ENCODE measurements at regions of chr12 and their contacts with region 1.

Region 1: DNA sequence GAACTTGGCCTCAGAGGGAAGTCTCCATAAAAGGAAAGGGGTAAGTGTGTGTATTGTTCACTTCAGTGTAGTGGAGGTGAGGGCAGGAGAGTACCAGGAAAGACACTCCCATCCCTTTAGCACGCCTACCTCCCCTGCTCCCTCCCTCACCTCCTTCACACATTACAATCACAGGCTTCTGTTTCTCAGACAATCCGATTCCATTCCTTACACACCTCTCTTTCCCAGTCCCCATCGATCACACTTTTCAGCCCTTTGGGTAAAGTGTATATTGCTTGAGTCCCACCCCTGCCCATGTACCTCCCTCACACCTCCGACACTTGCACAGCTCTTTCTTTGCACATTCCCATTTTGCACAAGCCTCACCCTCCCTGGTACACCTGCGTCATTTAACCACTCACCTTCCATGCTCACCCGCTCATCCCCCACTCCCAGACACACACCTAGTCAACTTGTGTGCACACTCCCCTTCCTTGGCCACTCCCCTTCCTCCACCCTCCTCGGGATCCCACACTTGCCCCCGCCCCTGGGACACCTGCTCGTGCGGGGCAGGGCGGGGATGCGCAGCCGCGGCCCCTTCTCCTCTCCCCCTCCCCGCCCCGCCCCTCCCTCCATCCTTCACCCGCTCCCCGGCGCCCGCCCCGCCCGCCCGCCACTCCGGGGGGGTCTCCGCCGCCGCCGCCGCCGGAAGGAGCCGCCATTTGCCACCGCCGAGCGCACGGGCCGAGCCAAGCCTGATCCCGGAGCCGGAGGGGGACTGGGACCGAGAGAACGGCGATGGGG is at the start of gene MARCHF9:
- DNase-seq: peak; percentile 61 to 77 (median 70)
- H3K4me3 ChIP-seq: peak within 1 kb of the TSS; percentile 59 to 84 (median 74)
- H3K27ac ChIP-seq: peak within 1 kb of the TSS in 1 of 2 experiments; percentile 49
- H3K4me1 ChIP-seq: peaks cover 18 to 53% (median 48%) of the 10 kb centered on the region in 4 experiments
- H3K27me3 ChIP-seq: peaks cover 0 to 4% (median 0%) of the 10 kb centered on the region in 5 experiments

Region 2: GRCh38 chr12:57765042-57765697 is 10.6 kb after region 1 on chr12:
- CTCF ChIA-PET with region 1: interaction called, 43 read pairs
- POLR2A ChIA-PET with region 1: interaction called, 3 read pairs
- DNase-seq: peak in 2 of 3 donors; percentile 60 to 67
- H3K4me3 ChIP-seq: peak overlapping the region; percentile 30 to 77 (median 58)
- H3K27ac ChIP-seq: no peak overlapping the region
- H3K4me1 ChIP-seq: peaks cover 0 to 29% (median 26%) of the 10 kb centered on the region in 4 experiments
- H3K27me3 ChIP-seq: peaks cover 0 to 50% (median 20%) of the 10 kb centered on the region in 5 experiments

Region 3: DNA sequence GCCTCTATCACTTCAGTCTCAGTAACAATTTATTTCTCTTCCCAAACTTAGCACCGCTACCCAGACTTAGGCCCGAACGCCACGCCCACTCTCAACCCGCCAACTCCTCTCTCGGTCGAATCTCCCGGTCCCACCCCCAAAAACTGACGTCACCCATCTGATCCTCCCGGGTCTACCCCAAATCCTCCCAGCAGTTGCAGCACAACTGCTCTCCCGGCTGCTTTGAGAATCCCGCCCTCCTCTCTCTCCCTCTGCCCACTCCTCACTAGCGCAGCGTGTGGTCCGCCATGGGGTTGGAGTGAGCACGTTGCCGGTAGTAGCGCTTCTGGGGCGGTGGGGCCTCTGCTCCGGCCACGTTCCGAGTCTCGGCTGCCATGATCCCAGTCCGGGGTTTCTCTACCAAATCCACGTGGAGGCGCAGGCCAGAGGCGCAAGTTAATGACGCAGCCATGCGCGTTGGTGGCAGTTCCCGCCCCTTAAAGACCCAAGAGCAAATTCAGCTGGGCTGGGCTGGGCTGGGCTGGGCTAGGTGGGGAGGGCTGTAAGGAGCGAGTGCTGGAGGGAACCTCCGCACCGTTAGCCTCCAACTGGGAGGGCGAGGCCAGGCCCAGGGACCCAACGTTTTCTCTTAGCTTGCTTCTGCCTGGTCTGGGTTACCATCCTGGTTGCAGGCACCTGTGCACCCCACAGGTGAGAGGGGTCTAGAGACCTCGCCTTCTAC is 17.3 kb after region 1 on chr12 and contains the start of gene METTL1:
- CTCF ChIA-PET with region 1: interaction called, 74 read pairs
- POLR2A ChIA-PET with region 1: interaction called, 6 read pairs
- DNase-seq: peak; percentile 97 to 99 (median 98)
- H3K4me3 ChIP-seq: peak within 1 kb of the TSS; percentile 86 to 96 (median 93)
- H3K27ac ChIP-seq: peak within 1 kb of the TSS; percentile 64 to 88
- H3K4me1 ChIP-seq: peaks cover 2 to 24% (median 19%) of the 10 kb centered on the region in 4 experiments
- H3K27me3 ChIP-seq: peaks cover 0 to 10% (median 3%) of the 10 kb centered on the region in 5 experiments

Measured in common myeloid progenitor, CD34-positive (primary cell).